ENCODE measurements at regions of chr9 and their contacts with region 1.

Region 1: GRCh38 chr9:98974994-98975712 is 31.4 kb downstream of the COL15A1 start:
- DNase-seq: peak; percentile 55 to 86 (median 75)
- ATAC-seq: peak; percentile 94
- H3K4me3 ChIP-seq: peak overlapping the region; percentile 40
- H3K4me3 Mint-ChIP-seq: peak overlapping the region in 9 of 10 donors; percentile 40 to 75 (median 59)
- H3K27ac ChIP-seq: no peak overlapping the region
- H3K27ac Mint-ChIP-seq: no peak overlapping the region
- H3K4me1 ChIP-seq: no peaks in the 10 kb centered on the region
- H3K4me1 Mint-ChIP-seq: peaks cover 0 to 16% (median 5%) of the 10 kb centered on the region in 7 donors
- H3K27me3 ChIP-seq: no peaks in the 10 kb centered on the region
- H3K27me3 Mint-ChIP-seq: peaks cover 0 to 33% (median 10%) of the 10 kb centered on the region in 5 donors

Region 2: GRCh38 chr9:98848450-98849149 is 126.6 kb before region 1 on chr9:
- CTCF ChIA-PET with region 1: no interaction called
- POLR2A ChIA-PET with region 1: no interaction called
- intact Hi-C with region 1: loop called (anchors 1 to 5 kb)
- DNase-seq: peak; percentile 26 to 74 (median 55)
- ATAC-seq: peak; percentile 95
- H3K4me3 ChIP-seq: no peak overlapping the region
- H3K4me3 Mint-ChIP-seq: no peak overlapping the region
- H3K27ac ChIP-seq: no peak overlapping the region
- H3K27ac Mint-ChIP-seq: peak overlapping the region in 4 of 9 donors; percentile 3 to 64 (median 38)
- H3K4me1 ChIP-seq: no peaks in the 10 kb centered on the region
- H3K4me1 Mint-ChIP-seq: peaks cover 0 to 15% (median 4%) of the 10 kb centered on the region in 7 donors
- H3K27me3 ChIP-seq: no peaks in the 10 kb centered on the region
- H3K27me3 Mint-ChIP-seq: no peaks in the 10 kb centered on the region

Measured in naive thymus-derived CD4-positive, alpha-beta T cell (primary cell).